Calu3 (cell line): ENCODE measurements at regions of chr1 and their contacts with region 1.

Region 1: DNA sequence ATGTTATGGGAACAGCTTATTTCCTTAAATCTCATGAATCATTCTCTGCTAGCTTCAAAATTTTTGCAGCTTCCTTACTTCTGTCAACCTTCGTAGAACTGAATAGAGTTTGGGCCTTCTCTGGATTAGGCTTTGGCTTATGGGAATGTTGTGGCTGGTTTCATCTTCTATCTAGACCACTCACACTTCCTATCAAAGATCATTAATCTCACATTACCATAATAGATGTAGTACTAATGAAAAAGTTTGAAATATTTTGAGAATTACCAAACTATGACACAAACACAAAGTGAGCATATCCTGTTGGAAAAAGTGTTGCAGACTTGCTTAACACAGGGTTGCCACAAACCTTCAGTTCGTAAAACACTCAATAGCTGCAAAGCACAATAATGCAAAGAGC is 30.3 kb downstream of the ASPM start:
- DNase-seq: no peak
- H3K4me3 Mint-ChIP-seq: no peak overlapping the region
- H3K27ac Mint-ChIP-seq: no peak overlapping the region
- H3K4me1 Mint-ChIP-seq: no peaks in the 10 kb centered on the region
- H3K27me3 Mint-ChIP-seq: no peaks in the 10 kb centered on the region
- CTCF ChIP-seq: no peak

Region 2: DNA sequence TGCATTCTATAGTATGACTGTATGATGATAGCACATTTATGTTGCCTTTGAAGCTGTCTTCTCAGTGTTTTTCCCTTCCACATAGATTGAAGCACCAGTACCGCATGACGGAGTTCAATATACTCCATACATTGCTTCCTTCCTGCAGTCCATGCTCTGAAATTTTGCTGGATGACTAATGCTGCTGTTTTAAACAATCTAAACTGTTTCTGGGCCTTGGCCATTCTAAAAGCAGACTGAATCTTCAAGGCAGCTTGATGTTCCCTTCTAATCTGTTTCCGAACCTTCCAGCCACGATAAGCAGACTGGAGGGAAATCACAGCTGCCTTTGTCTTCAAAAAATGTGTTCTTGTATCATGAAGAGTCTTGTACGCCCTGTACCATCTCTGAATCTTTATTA is 12.9 kb before region 1 on chr1:
- CTCF ChIA-PET with region 1: interaction called, 10 read pairs
- intact Hi-C with region 1: no loop called
- DNase-seq: no peak
- H3K4me3 Mint-ChIP-seq: no peak overlapping the region
- H3K27ac Mint-ChIP-seq: no peak overlapping the region
- H3K4me1 Mint-ChIP-seq: peaks cover 5% of the 10 kb centered on the region
- H3K27me3 Mint-ChIP-seq: no peaks in the 10 kb centered on the region
- CTCF ChIP-seq: no peak